WTC11 (cell line): ENCODE measurements at regions of chr1 and their contacts with region 1.

Region 1: DNA sequence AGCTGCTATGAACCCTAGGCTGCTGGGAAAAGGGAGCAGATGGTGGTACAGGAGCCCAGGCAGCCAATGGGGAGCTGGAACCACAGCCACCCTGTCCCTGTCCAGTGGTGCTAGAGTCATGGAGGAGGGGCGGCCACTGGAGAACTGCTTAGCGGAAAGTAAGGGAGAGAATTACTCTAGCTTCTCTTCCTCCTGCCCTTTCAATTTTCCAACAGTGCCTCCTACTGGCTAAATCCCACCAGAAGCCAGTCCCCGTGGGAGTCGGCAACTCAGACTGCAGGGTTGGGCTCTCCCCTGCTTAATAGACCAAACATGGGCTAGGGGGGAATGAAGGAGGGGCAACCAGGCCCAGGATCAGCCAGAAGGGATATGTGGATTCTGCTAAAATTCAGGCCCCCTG is 154.5 kb downstream of the ACTL8 start:
- DNase-seq: peak; percentile 74
- ATAC-seq: peak; percentile 90
- H3K4me3 Mint-ChIP-seq: no peak overlapping the region
- H3K27ac Mint-ChIP-seq: no peak overlapping the region
- H3K4me1 Mint-ChIP-seq: peaks cover 11% of the 10 kb centered on the region
- H3K27me3 Mint-ChIP-seq: peaks cover 12% of the 10 kb centered on the region
- CTCF ChIP-seq: no peak

Region 2: DNA sequence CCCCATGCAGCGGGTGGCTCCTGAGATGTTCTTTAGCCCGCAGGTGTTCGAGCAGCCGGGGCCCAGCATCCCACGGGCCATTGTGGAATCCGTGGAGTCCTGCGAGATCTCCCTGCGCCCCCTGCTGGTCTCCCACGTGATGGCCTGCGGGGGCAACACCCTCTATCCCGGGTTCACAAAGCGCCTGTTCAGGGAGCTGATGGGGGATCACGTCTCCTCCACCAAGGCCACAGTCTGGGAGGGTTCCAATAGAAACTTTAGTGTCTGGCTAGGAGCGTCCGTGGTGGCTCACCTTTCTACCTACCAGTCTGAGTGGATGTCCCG is 83.5 kb before region 1 on chr1:
- CTCF ChIA-PET with region 1: interaction called, 10 read pairs
- POLR2A ChIA-PET with region 1: no interaction called
- DNase-seq: peak; percentile 83
- ATAC-seq: peak; percentile 81
- H3K4me3 Mint-ChIP-seq: no peak overlapping the region
- H3K27ac Mint-ChIP-seq: no peak overlapping the region
- H3K4me1 Mint-ChIP-seq: peaks cover 7% of the 10 kb centered on the region
- H3K27me3 Mint-ChIP-seq: peaks cover 4% of the 10 kb centered on the region; the same call in 1 of the 2 replicates
- CTCF ChIP-seq: peak; percentile 80

Region 3: DNA sequence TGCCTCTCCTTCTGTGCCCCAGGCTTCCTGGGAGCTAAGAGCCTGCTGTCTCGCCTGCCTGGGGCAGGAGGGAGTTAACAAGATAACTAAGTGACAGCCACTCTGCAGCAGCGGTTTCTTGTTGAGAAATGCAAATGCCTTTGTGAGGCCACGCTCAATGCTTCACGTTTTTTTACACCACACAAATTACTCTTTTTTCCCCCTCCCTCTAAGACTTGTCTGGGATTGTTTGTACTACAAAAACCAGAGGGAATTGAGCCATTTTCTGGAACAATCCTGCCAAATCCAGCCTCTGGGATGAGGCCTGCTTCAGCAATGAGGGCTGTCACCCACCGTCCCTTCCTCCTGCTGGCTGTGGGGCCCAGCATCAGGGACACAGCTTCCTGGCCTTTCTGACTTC is 34.9 kb before region 1 on chr1:
- CTCF ChIA-PET with region 1: interaction called, 12 read pairs
- POLR2A ChIA-PET with region 1: no interaction called
- DNase-seq: no peak
- ATAC-seq: no peak; the same call in 1 of the 2 replicates
- H3K4me3 Mint-ChIP-seq: no peak overlapping the region
- H3K27ac Mint-ChIP-seq: no peak overlapping the region
- H3K4me1 Mint-ChIP-seq: peaks cover 12% of the 10 kb centered on the region
- H3K27me3 Mint-ChIP-seq: peaks cover 5% of the 10 kb centered on the region
- CTCF ChIP-seq: no peak

Region 4: GRCh38 chr1:17930635-17931034 is 21.0 kb after region 1 on chr1:
- CTCF ChIA-PET with region 1: no interaction called
- POLR2A ChIA-PET with region 1: no interaction called
- DNase-seq: no peak
- ATAC-seq: no peak
- H3K4me3 Mint-ChIP-seq: no peak overlapping the region
- H3K27ac Mint-ChIP-seq: no peak overlapping the region
- H3K4me1 Mint-ChIP-seq: 0 out of 2 replicates have a peak, but pooled peaks cover 4% of the 10 kb centered on the region
- H3K27me3 Mint-ChIP-seq: peaks cover 18% of the 10 kb centered on the region
- CTCF ChIP-seq: no peak